A549 (cell line): ENCODE measurements at regions of chr11 and their contacts with region 1.

Region 1: DNA sequence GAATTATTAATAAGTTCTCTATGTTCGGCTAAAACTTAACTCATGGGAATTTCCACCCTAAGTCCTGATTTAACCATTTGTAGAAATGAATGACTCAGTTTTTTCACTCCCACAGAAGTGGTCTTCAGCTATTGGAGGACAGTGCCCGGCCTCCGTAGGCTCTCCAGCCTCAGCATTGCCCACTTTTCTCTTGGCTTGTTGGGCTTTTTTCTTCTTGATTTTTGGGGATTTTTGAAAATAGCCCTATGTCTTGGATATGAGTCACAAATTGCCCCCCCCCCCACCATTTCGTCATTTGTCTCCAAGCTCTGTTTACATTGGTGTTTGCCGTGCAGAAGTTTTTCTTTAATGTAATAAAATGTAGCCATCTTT is 66.7 kb downstream of the PACS1 start:
- DNase-seq: peak; percentile 58 to 74
- ATAC-seq: peak; percentile 42 to 68; a peak in 5 of 6 replicates
- H3K4me3 ChIP-seq: peak overlapping the region; percentile 10; the same call in 1 of the 3 replicates
- H3K27ac ChIP-seq: peak overlapping the region; percentile 83 to 87
- H3K4me1 ChIP-seq: peaks cover 93% of the 10 kb centered on the region
- CTCF ChIP-seq: no peak
- EP300 ChIP-seq: peak; percentile 27 to 39; a peak in 1 of 5 replicates
- POLR2A ChIP-seq: no peak
- RAD21 ChIP-seq: peak in 1 of 2 experiments; percentile 20; a peak in 1 of 5 replicates

Region 2: DNA sequence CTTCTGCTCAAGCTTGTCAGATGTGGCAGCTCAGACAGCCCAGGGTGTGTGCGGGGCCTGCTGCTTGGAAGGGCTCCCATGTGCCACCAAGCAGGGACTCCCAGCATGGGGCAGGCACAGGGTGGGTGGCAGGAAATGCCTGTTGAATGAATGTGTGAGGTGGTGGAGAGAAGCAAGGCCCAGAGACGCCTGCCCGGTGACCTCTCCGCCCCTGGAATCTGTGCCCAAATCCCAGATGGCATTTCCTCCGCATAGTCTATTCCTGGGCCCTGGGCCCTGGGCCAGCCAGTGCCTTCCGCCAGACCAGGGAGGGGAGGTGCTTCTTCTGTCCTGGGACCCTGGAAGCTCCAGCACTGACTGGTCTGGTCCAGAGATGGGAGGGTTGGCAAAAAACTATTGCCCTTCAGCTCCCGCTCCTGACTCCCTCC is 121.3 kb before region 1 on chr11:
- CTCF ChIA-PET with region 1: no interaction called
- POLR2A ChIA-PET with region 1: no interaction called
- DNase-seq: no peak
- ATAC-seq: peak in 1 of 2 experiments; percentile 26; a peak in 3 of 6 replicates
- H3K4me3 ChIP-seq: no peak overlapping the region
- H3K27ac ChIP-seq: peak overlapping the region in 1 of 2 experiments; percentile 48; a peak in 2 of 6 replicates
- H3K4me1 ChIP-seq: peaks cover 12% of the 10 kb centered on the region
- CTCF ChIP-seq: no peak
- EP300 ChIP-seq: no peak
- POLR2A ChIP-seq: no peak
- RAD21 ChIP-seq: no peak

Region 3: GRCh38 chr11:66081505-66081904 is 55.2 kb before region 1 on chr11:
- CTCF ChIA-PET with region 1: interaction called, 10 read pairs
- POLR2A ChIA-PET with region 1: no interaction called
- DNase-seq: no peak
- ATAC-seq: peak in 1 of 2 experiments; percentile 18; a peak in 2 of 6 replicates
- H3K4me3 ChIP-seq: no peak overlapping the region
- H3K27ac ChIP-seq: peak overlapping the region; percentile 58 to 82
- H3K4me1 ChIP-seq: peaks cover 84% of the 10 kb centered on the region
- CTCF ChIP-seq: no peak
- EP300 ChIP-seq: no peak
- POLR2A ChIP-seq: no peak
- RAD21 ChIP-seq: no peak

Region 4: GRCh38 chr11:66100272-66101065 is 36.3 kb before region 1 on chr11:
- CTCF ChIA-PET with region 1: interaction called, 10 read pairs
- POLR2A ChIA-PET with region 1: interaction called, 5 read pairs
- DNase-seq: peak; percentile 36 to 59
- ATAC-seq: peak; percentile 82; a peak in 5 of 6 replicates
- H3K4me3 ChIP-seq: no peak overlapping the region
- H3K27ac ChIP-seq: peak overlapping the region; percentile 51 to 72
- H3K4me1 ChIP-seq: peaks cover 56% of the 10 kb centered on the region
- CTCF ChIP-seq: no peak
- EP300 ChIP-seq: no peak
- POLR2A ChIP-seq: no peak
- RAD21 ChIP-seq: no peak

Region 5: GRCh38 chr11:66112601-66113098 is 24.1 kb before region 1 on chr11:
- CTCF ChIA-PET with region 1: interaction called, 41 read pairs
- POLR2A ChIA-PET with region 1: interaction called, 3 read pairs
- DNase-seq: peak in 1 of 2 experiments; percentile 70
- ATAC-seq: peak; percentile 68 to 73
- H3K4me3 ChIP-seq: peak overlapping the region; percentile 9; the same call in 1 of the 3 replicates
- H3K27ac ChIP-seq: peak overlapping the region; percentile 93
- H3K4me1 ChIP-seq: peaks cover 95% of the 10 kb centered on the region
- CTCF ChIP-seq: no peak
- EP300 ChIP-seq: peak; percentile 26 to 60; a peak in 2 of 5 replicates
- POLR2A ChIP-seq: no peak
- RAD21 ChIP-seq: no peak

Region 6: GRCh38 chr11:66119348-66120133 is 17.2 kb before region 1 on chr11:
- CTCF ChIA-PET with region 1: interaction called, 41 read pairs
- POLR2A ChIA-PET with region 1: interaction called, 6 read pairs
- DNase-seq: peak; percentile 60 to 89
- ATAC-seq: peak; percentile 89 to 91
- H3K4me3 ChIP-seq: peak overlapping the region; percentile 6; the same call in 1 of the 3 replicates
- H3K27ac ChIP-seq: peak overlapping the region; percentile 93 to 94
- H3K4me1 ChIP-seq: peaks cover 86% of the 10 kb centered on the region
- CTCF ChIP-seq: no peak
- EP300 ChIP-seq: peak; percentile 44 to 73; a peak in 3 of 5 replicates
- POLR2A ChIP-seq: no peak
- RAD21 ChIP-seq: peak in 1 of 2 experiments; percentile 3; a peak in 2 of 5 replicates

Region 7: DNA sequence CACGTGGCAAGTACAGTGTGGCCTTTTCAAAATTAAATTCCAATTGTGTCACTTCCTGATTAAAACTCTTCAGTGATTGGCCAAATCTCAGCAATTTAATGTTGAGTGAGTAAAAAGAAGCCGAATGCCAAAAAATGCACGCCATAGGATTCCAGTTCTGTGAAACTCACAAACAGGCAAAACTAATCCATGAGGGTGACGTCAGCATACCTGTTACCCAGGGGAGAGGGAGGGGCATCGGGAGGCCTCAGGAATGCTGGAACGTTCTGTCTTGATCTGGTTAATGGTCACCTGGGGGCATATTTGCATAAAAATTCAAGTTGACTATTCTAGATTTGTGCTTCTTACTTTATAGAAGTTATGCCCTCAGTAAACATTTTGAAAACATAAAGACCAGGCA is 91.8 kb after region 1 on chr11:
- CTCF ChIA-PET with region 1: no interaction called
- POLR2A ChIA-PET with region 1: no interaction called
- DNase-seq: no peak
- ATAC-seq: no peak
- H3K4me3 ChIP-seq: no peak overlapping the region
- H3K27ac ChIP-seq: no peak overlapping the region
- H3K4me1 ChIP-seq: no peaks in the 10 kb centered on the region
- CTCF ChIP-seq: no peak
- EP300 ChIP-seq: no peak
- POLR2A ChIP-seq: no peak
- RAD21 ChIP-seq: no peak